Activated CD8-positive, alpha-beta memory T cell treated with anti-CD3 and anti-CD28 coated beads, Interleukin-2, amount 10 ng/mL, durations not matched to agents 7 days and 5 days (primary cell): ENCODE measurements at regions of chr2 and their contacts with region 1.

Region 1: GRCh38 chr2:7672027-7672684 is 754.9 kb downstream of the RNF144A start:
- DNase-seq: peak; percentile 79
- ATAC-seq: peak; percentile 87
- H3K4me3 Mint-ChIP-seq: peak overlapping the region; percentile 45
- H3K27ac Mint-ChIP-seq: peak overlapping the region; percentile 94
- H3K4me1 Mint-ChIP-seq: peaks cover 47% of the 10 kb centered on the region
- H3K27me3 Mint-ChIP-seq: no peaks in the 10 kb centered on the region

Region 2: GRCh38 chr2:6986301-6987176 is 685.6 kb before region 1 on chr2:
- CTCF ChIA-PET with region 1: no interaction called
- DNase-seq: no peak
- ATAC-seq: no peak
- H3K4me3 Mint-ChIP-seq: no peak overlapping the region
- H3K27ac Mint-ChIP-seq: no peak overlapping the region
- H3K4me1 Mint-ChIP-seq: no peaks in the 10 kb centered on the region
- H3K27me3 Mint-ChIP-seq: no peaks in the 10 kb centered on the region

Region 3: GRCh38 chr2:7309582-7309981 is 362.6 kb before region 1 on chr2:
- CTCF ChIA-PET with region 1: no interaction called
- DNase-seq: no peak
- ATAC-seq: no peak
- H3K4me3 Mint-ChIP-seq: no peak overlapping the region
- H3K27ac Mint-ChIP-seq: no peak overlapping the region
- H3K4me1 Mint-ChIP-seq: no peaks in the 10 kb centered on the region
- H3K27me3 Mint-ChIP-seq: peaks cover 2% of the 10 kb centered on the region

Region 4: DNA sequence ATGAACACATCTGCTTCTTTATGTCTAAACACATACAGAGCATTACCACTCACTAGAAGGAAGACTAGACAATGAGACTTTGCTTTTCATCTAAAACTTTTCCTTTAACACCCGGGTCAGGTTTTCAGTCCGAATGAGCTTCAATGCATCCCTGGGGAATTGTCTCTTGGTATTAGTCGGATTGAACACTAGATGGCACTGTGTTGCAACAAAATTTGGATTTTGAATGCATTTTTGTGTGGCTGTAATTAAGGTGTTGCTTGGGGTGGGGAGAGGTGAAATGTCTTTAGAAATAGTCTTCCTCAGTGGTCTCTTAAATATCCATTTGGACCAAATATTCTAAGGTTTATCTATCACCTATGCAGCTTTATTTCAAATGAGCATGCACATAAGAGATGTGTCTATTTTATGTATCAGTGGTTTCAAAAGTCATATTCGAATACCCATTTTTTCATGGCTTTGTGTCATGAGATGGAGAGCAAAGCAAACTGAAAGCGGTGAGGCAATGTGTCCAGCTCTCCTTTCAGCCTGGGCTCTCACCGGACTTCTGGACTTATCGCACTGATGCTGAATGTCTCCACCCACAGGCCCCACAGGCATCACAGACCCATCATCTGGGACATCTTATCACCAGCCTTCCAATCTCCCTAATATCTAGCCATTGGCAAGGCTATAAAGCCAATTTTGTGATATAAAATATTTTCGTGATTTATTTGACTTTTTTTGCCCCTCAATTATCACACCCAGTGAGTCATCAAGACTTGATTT is 244.7 kb before region 1 on chr2:
- CTCF ChIA-PET with region 1: interaction called, 31 read pairs
- DNase-seq: no peak
- ATAC-seq: no peak
- H3K4me3 Mint-ChIP-seq: peak overlapping the region; percentile 45
- H3K27ac Mint-ChIP-seq: peak overlapping the region; percentile 75
- H3K4me1 Mint-ChIP-seq: peaks cover 42% of the 10 kb centered on the region
- H3K27me3 Mint-ChIP-seq: no peaks in the 10 kb centered on the region

Region 5: GRCh38 chr2:7595206-7595605 is 77.0 kb before region 1 on chr2:
- CTCF ChIA-PET with region 1: interaction called, 11 read pairs
- DNase-seq: no peak
- ATAC-seq: no peak
- H3K4me3 Mint-ChIP-seq: no peak overlapping the region
- H3K27ac Mint-ChIP-seq: no peak overlapping the region
- H3K4me1 Mint-ChIP-seq: peaks cover 26% of the 10 kb centered on the region
- H3K27me3 Mint-ChIP-seq: no peaks in the 10 kb centered on the region

Region 6: GRCh38 chr2:7649461-7650228 is 22.5 kb before region 1 on chr2:
- CTCF ChIA-PET with region 1: interaction called, 11 read pairs
- DNase-seq: peak; percentile 62
- ATAC-seq: peak; percentile 61
- H3K4me3 Mint-ChIP-seq: peak overlapping the region; percentile 33
- H3K27ac Mint-ChIP-seq: peak overlapping the region; percentile 83
- H3K4me1 Mint-ChIP-seq: peaks cover 14% of the 10 kb centered on the region
- H3K27me3 Mint-ChIP-seq: no peaks in the 10 kb centered on the region

Region 7: DNA sequence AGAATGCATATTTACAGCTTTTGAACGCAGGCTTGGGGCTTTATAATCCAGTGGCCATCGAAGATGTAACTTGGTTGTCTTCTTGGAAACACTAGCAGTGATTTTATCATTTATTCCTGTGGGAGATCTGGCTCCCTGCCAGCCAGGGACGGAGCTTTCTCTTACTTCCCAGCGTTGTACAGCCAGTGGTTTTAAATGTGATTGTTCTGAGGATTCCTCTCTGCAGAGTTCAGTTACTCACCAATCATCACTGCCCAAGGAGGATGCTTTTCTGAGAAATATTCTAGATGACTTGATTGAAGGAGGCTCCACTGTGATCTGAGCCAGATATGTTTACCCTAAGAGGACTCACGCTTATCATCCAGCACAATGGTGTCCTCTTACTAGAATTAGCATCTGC is 10.7 kb before region 1 on chr2:
- CTCF ChIA-PET with region 1: interaction called, 11 read pairs
- DNase-seq: no peak
- ATAC-seq: no peak
- H3K4me3 Mint-ChIP-seq: no peak overlapping the region
- H3K27ac Mint-ChIP-seq: no peak overlapping the region
- H3K4me1 Mint-ChIP-seq: peaks cover 2% of the 10 kb centered on the region
- H3K27me3 Mint-ChIP-seq: no peaks in the 10 kb centered on the region

Region 8: GRCh38 chr2:7692657-7693161 is 20.6 kb after region 1 on chr2:
- CTCF ChIA-PET with region 1: interaction called, 23 read pairs
- DNase-seq: no peak
- ATAC-seq: peak; percentile 6
- H3K4me3 Mint-ChIP-seq: peak overlapping the region; percentile 44
- H3K27ac Mint-ChIP-seq: peak overlapping the region; percentile 90
- H3K4me1 Mint-ChIP-seq: peaks cover 58% of the 10 kb centered on the region
- H3K27me3 Mint-ChIP-seq: no peaks in the 10 kb centered on the region

Region 9: DNA sequence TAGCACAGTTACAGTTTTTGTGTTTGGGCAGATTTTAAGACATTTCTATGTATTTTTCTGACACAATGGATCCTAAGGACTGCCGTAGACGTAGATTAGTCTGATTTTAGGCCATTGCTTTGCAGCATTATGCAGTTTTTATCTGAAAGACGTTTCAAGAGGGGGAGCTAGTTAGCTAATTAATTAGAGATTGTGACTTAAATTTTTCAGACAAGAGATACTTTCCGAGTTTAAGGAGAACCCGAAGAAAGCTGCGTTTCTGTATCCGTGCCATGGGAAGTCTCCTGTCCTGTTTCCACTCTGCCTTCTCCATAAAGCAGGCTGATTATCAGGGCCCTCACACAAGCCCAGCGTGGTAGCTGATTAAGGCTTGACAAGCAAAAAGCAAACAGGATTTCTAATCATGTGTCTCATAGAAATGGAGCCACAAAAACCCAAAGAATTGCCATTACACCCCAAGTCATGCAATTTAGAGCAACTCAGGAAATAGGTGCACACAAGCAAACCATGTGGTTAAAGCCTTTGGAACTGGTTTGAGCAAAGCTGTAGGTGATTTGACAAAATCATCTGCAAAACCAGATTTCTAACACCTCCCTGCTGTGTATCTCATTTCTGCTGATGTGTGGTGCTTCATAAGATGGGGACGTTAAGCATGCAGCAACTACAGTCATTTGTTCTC is 53.2 kb after region 1 on chr2:
- CTCF ChIA-PET with region 1: interaction called, 27 read pairs
- DNase-seq: peak; percentile 84
- ATAC-seq: peak; percentile 73
- H3K4me3 Mint-ChIP-seq: peak overlapping the region; percentile 90
- H3K27ac Mint-ChIP-seq: peak overlapping the region; percentile 97
- H3K4me1 Mint-ChIP-seq: peaks cover 51% of the 10 kb centered on the region
- H3K27me3 Mint-ChIP-seq: no peaks in the 10 kb centered on the region